ENCODE measurements at regions of chr7 and their contacts with region 1.

Region 1: GRCh38 chr7:106285051-106285854 is 470 bp upstream of the NAMPT start:
- DNase-seq: peak; percentile 100
- ATAC-seq: peak; percentile 85
- H3K4me3 Mint-ChIP-seq: peak overlapping the region; percentile 88
- H3K27ac Mint-ChIP-seq: peak overlapping the region; percentile 99
- H3K4me1 Mint-ChIP-seq: peaks cover 35% of the 10 kb centered on the region
- H3K27me3 Mint-ChIP-seq: no peaks in the 10 kb centered on the region
- CTCF ChIP-seq: no peak

Region 2: DNA sequence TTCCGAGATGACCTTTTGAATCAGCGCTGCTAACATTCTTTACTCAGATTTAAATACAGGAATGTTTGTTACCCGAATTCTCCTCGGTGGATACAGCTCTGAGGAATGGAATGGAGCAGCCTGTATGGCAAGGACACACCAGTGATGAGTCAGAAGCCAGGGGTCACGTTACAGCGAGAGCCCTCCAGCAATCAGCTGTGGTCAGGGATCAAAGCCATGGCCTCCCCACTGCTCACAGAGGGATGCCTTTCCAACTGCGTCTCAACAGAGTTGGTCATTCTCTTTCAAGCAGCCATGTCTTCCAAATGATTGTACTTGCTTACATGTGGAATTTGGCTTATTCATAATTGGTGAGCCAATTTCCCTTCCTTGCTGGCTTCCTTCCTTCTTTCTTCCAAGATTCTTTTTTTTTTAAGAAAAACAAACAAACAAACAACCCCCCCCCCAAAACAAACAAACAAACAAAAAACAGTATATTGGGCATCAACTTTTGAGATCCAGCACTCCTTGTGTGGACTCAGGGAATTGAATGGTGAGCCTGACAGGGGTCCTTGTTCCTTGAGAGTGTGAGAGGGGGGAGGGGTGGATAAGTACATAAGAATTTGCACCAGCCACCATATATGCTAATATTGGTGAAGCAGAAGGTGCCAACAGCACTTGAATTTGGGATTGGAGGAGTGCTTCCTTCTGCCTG is 509.0 kb before region 1 on chr7:
- CTCF ChIA-PET with region 1: no interaction called
- POLR2A ChIA-PET with region 1: no interaction called
- intact Hi-C with region 1: no loop called
- DNase-seq: no peak
- ATAC-seq: no peak
- H3K4me3 Mint-ChIP-seq: no peak overlapping the region
- H3K27ac Mint-ChIP-seq: no peak overlapping the region
- H3K4me1 Mint-ChIP-seq: no peaks in the 10 kb centered on the region
- H3K27me3 Mint-ChIP-seq: no peaks in the 10 kb centered on the region
- CTCF ChIP-seq: no peak

Region 3: GRCh38 chr7:106196460-106197021 is 88.7 kb before region 1 on chr7:
- CTCF ChIA-PET with region 1: no interaction called
- POLR2A ChIA-PET with region 1: no interaction called
- intact Hi-C with region 1: no loop called
- DNase-seq: no peak
- ATAC-seq: no peak
- H3K4me3 Mint-ChIP-seq: no peak overlapping the region
- H3K27ac Mint-ChIP-seq: no peak overlapping the region
- H3K4me1 Mint-ChIP-seq: no peaks in the 10 kb centered on the region
- H3K27me3 Mint-ChIP-seq: peaks cover 19% of the 10 kb centered on the region
- CTCF ChIP-seq: no peak

Region 4: DNA sequence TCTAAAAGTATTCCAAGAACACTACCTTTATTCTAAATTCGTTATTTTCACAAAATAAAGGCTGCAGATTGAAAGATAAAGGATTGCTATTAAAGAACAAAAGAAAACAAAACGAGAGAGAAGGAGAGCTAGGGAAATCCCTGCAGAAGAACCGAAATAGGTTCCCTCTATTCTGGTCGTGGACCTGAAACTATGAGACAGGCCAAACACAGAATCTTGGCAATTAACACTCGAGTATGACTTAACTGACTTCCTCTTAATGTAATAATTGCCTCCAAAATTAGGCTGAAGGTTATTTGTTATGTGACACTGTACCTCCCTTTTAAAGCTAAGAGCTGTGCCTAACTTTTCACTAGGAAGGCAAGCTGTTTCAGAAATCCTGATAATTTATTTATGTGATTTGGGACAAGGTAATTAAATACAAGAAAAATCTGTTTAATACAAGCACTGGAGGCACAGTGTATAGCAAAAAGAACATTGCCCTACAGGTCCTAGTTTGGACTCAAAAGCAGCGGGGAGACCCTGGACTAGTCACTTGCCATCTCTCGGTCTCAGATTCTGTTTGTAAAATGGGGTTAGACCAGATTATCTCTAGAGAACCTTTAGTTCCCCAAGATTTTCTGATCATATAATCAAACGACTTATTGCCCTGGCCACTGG is 12.1 kb before region 1 on chr7:
- CTCF ChIA-PET with region 1: interaction called, 6 read pairs
- POLR2A ChIA-PET with region 1: interaction called, 10 read pairs
- intact Hi-C with region 1: no loop called
- DNase-seq: no peak
- ATAC-seq: no peak
- H3K4me3 Mint-ChIP-seq: no peak overlapping the region
- H3K27ac Mint-ChIP-seq: peak overlapping the region; percentile 42
- H3K4me1 Mint-ChIP-seq: peaks cover 37% of the 10 kb centered on the region
- H3K27me3 Mint-ChIP-seq: no peaks in the 10 kb centered on the region
- CTCF ChIP-seq: no peak

Region 5: DNA sequence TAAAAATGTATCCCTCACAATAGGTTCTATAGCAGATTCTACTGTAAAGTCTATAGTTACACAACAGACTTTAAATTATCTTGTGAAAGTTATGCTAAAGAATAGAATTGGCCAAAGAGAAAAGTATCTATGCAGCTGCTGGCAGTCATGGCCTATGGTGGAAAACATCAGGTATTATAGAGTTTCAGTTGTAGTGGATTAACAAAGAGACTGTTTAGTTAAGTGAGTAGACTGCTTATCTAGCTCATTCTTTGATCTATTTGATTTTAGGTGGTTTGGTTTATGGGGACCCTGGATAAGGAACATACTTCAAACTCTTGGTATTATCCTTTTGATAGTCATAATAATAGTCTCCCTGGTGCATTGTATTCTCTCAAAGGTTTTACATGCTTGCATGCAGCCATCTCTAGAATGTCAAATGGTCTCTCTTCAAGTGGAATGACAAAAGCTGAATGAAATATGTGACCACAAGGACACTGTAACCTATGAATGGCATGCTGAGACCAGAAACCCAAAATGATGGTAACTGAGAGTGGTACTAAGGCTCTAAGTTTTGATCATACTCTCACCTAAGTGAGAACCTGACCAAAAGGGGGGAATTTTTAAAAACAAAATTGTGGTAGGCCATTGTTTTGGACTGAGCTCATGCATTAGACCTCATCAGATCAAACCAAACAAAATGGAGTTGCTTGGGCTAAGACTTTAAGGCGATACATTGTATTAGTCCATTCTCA is 54.4 kb after region 1 on chr7:
- CTCF ChIA-PET with region 1: interaction called, 3 read pairs
- POLR2A ChIA-PET with region 1: interaction called, 111 read pairs
- intact Hi-C with region 1: no loop called
- DNase-seq: no peak
- ATAC-seq: peak; percentile 15
- H3K4me3 Mint-ChIP-seq: no peak overlapping the region
- H3K27ac Mint-ChIP-seq: peak overlapping the region; percentile 28
- H3K4me1 Mint-ChIP-seq: peaks cover 29% of the 10 kb centered on the region
- H3K27me3 Mint-ChIP-seq: peaks cover 11% of the 10 kb centered on the region
- CTCF ChIP-seq: no peak

Region 6: DNA sequence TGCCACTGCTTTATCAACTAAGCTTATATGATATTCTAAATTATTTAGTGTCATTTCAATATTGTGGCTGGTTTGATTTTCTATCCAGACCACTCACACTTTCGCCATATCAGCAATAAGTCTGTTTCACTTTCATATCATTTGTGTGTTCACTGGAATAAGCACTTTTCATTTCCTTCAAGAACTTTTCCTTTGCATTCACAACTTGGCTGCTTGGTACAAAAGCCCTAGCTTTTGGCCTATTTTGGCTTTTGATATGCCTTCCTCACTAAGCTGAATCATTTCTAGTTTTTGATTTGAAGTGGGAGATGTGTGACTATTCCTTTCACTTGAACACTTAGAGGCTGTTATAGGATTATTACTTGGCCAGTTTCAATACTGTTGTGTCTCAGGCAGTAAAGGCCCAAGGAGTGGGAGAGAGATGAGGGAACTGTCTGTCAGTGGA is 120.5 kb after region 1 on chr7:
- CTCF ChIA-PET with region 1: interaction called, 3 read pairs
- POLR2A ChIA-PET with region 1: interaction called, 11 read pairs
- intact Hi-C with region 1: no loop called
- DNase-seq: peak; percentile 40
- ATAC-seq: peak; percentile 95
- H3K4me3 Mint-ChIP-seq: no peak overlapping the region
- H3K27ac Mint-ChIP-seq: peak overlapping the region; percentile 27
- H3K4me1 Mint-ChIP-seq: peaks cover 32% of the 10 kb centered on the region
- H3K27me3 Mint-ChIP-seq: peaks cover 24% of the 10 kb centered on the region
- CTCF ChIP-seq: no peak

Region 7: GRCh38 chr7:106461993-106462859 is 177.0 kb after region 1 on chr7:
- CTCF ChIA-PET with region 1: interaction called, 11 read pairs
- POLR2A ChIA-PET with region 1: interaction called, 18 read pairs
- intact Hi-C with region 1: no loop called
- DNase-seq: peak; percentile 13
- ATAC-seq: peak; percentile 69
- H3K4me3 Mint-ChIP-seq: peak overlapping the region; percentile 25
- H3K27ac Mint-ChIP-seq: peak overlapping the region; percentile 63
- H3K4me1 Mint-ChIP-seq: peaks cover 25% of the 10 kb centered on the region
- H3K27me3 Mint-ChIP-seq: no peaks in the 10 kb centered on the region
- CTCF ChIP-seq: peak; percentile 79